OCI-LY7 (cell line): ENCODE measurements at regions of chr1 and their contacts with region 1.

Region 1: DNA sequence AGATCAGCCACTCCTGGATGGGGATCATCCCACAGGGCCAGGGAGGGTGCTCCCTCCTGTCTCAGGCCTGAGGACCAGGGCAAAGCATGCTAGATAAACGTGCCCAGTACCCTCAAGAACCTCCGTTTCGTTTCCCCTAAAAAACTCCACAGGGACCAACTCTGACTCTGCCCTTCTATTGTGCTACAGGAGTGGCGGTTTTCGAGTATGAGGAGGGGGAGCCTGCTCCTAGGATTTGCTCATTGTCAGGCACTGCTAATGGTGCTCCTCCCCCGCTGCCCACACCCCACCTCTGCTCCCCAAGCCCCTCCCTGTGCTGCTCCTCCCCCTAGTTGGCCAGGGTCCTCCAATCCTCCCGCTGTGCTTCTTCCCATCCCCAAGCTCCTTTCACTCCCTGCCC is 32.0 kb downstream of the PGBD5 start:
- DNase-seq: no peak
- H3K4me3 ChIP-seq: no peak overlapping the region
- H3K27ac ChIP-seq: no peak overlapping the region
- H3K4me1 ChIP-seq: no peaks in the 10 kb centered on the region
- CTCF ChIP-seq: no peak

Region 2: DNA sequence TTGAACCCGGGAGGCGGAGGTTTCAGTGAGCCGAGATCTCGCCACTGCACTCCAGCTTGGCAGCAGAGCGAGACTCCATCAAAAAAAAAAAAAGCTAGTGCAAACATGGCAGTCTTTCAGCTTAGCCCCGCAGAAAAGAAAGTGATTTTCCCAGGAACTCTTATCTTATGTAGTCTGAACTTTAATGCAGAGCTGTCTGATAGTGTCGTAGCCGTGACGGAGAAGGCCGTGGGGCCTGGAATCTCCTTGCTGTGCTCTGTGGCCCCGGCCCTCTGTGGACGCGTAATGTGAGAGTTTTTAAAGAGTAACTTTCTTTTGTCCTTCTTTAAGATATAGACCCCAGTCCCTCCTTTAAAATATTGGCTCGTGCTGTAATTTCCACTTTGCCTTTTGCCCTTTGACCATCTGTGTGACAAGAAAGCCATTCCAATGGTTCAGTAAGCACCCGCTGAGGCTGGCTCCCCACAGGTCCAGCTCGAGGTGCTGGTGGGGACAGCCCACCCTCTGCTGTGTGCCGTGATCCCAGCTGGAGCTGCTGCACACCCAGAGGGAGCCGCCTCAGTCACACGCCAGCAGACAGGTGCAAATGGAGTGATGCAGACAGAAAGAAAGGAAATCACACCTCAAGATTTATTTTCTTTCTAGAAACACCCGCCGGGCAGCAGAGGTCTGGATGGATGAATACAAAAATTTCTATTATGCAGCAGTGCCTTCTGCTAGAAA is 132.0 kb before region 1 on chr1:
- CTCF ChIA-PET with region 1: no interaction called
- POLR2A ChIA-PET with region 1: no interaction called
- intact Hi-C with region 1: no loop called
- DNase-seq: no peak
- H3K4me3 ChIP-seq: no peak overlapping the region
- H3K27ac ChIP-seq: no peak overlapping the region
- H3K4me1 ChIP-seq: peaks cover 7% of the 10 kb centered on the region
- CTCF ChIP-seq: no peak

Region 3: DNA sequence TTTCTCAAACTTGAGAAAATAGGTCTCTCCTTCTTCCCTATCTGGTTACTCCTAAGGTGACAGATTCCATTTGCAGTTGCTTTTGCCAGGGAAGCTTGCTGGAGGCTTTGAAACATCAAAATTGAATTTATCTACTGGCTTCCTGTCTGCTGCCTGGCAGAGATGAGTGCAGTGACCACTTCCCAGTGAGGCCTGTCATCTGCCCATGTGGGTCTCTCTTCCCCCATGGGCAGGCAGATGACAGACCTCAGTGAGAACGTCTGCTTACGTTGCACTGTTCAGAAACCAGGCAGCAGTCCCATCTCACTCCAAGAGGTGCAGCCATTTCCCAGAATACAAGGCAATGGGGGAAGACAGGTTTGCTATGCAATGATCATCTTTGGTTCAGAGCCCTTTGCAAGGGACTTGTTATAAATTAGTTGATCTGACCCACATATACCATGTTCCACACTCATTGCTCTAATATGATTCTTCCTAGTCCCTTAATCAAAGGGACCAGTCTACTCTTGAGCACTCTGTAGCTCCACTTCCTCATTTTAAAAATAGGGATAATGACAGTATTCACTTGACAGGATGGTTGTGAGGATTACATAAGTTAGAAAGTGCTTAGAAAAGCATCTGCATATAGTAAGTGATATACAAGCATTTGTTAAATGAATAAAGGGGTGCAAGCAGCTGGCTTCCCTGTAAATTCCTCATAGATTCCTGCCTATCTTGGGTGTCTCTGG is 21.4 kb after region 1 on chr1:
- CTCF ChIA-PET with region 1: no interaction called
- POLR2A ChIA-PET with region 1: no interaction called
- intact Hi-C with region 1: no loop called
- DNase-seq: no peak
- H3K4me3 ChIP-seq: no peak overlapping the region
- H3K27ac ChIP-seq: no peak overlapping the region
- H3K4me1 ChIP-seq: no peaks in the 10 kb centered on the region
- CTCF ChIP-seq: no peak

Region 4: DNA sequence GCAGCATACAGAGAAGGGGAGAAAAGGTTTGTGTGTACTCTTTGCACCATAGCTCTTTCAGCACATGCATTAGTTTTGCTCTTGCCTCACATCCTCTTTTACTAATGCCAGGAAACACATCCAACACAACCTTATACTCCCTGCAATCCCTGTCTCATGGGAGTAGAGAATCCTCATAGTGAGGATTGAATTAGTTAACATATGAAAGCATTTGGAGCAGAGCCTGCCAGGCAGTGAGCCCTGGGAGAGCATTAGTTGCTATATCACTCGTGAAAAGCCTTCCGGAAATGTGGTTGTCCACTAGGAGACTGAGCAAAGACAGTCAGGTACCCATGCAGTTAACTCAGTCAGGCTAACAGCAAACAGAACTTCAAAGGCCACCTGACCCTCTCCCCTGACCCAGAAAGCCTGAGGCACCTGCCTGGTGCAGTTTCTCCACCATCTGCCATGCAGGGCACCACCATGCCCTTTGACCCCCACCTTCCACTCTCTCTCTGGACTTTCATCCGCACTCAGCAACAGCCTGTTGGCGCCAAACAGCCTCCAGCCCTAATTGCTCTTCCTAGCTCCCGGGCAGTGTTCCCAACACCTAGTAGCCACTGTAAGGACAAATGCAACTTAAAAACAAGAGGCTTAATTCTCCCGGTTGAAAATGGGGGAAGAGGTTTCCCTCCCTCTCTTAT is 334.7 kb after region 1 on chr1:
- CTCF ChIA-PET with region 1: no interaction called
- POLR2A ChIA-PET with region 1: no interaction called
- intact Hi-C with region 1: no loop called
- DNase-seq: no peak
- H3K4me3 ChIP-seq: no peak overlapping the region
- H3K27ac ChIP-seq: no peak overlapping the region
- H3K4me1 ChIP-seq: no peaks in the 10 kb centered on the region
- CTCF ChIP-seq: no peak

Region 5: DNA sequence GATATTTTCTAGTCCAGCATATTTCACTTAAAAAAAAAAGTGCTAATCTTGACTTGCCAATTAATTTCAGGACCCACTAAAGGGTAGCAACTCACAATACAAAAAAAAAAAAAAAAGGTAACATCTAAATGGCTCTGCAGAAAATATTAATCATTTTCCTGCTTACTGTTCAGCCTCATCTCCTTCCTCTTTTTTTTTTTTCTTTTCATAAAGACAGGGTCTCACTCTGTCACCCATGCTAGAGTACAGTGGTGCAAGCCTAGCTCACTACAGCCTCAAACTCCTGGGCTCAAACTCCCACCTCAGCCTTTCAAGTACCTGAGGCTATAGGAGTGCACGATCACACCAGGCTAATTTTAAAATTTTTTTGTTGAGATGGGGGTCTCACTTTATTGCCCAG is 554.2 kb after region 1 on chr1:
- CTCF ChIA-PET with region 1: interaction called, 19 read pairs
- POLR2A ChIA-PET with region 1: no interaction called
- intact Hi-C with region 1: no loop called
- DNase-seq: peak; percentile 4
- H3K4me3 ChIP-seq: no peak overlapping the region
- H3K27ac ChIP-seq: no peak overlapping the region
- H3K4me1 ChIP-seq: peaks cover 8% of the 10 kb centered on the region
- CTCF ChIP-seq: no peak